Activated T-helper 1 cell treated with anti-CD3 and anti-CD28 coated beads, Interleukin-12 subunit alpha, Interleukin-12 subunit beta, Interleukin-2, Interleukin-4 antibody, amounts not matched to agents 30 ng/mL and 10 ng/mL and 1 ng/mL, durations not matched to agents 14 hours and 24 hours and 36 hours (primary cell): ENCODE measurements at regions of chr9 and their contacts with region 1.

Region 1: DNA sequence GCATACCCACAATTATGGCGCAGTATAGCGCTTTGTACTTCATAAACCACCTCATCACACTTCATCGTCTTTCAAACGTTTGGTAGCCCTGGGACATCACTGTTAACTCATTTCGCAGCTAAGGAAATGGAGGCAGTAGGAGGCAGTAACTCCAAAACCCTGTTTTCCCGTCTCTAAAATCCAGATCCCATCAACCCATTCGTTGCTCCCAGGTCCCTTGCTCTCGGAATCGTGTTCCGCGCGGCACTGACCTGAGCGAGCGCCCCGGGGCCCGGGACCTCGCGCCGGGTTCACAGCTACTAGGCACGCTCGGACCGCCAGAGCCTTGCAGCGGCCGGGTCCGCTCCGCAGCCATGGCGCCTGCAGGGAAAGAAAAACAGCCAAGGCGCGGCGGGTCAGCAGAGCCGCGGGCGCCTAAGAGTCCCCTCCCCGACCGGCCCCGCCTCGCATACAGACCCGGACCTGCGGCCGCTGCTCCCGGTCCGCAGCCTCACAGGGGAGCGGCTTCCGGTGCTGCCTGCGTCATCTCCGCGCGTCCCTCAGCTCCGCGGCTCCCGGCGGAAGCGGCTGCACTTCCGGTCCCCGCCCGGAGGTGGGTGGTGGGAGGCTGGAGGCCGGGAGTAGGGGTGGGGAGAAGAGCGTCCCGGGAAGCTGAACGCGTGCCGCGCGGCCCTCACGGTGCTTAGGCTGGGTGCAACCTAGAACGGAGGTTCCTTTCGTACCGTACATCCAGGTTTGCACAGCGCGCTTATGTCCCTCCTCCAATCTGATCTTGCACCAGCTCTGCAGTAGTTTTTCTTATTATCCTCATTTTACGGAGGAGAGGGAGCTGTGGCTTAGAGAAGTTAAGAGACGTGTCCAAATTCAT is at the start of gene FBXW2:
- DNase-seq: peak; percentile 90
- H3K4me3 Mint-ChIP-seq: peak within 1 kb of the TSS; percentile 98
- H3K27ac Mint-ChIP-seq: peak within 1 kb of the TSS; percentile 98
- H3K4me1 Mint-ChIP-seq: peaks cover 48% of the 10 kb centered on the region
- H3K27me3 Mint-ChIP-seq: no peaks in the 10 kb centered on the region
- total RNA-seq, gene FBXW2: 82.2 and 85.0 TPM in 2 replicates

Region 2: DNA sequence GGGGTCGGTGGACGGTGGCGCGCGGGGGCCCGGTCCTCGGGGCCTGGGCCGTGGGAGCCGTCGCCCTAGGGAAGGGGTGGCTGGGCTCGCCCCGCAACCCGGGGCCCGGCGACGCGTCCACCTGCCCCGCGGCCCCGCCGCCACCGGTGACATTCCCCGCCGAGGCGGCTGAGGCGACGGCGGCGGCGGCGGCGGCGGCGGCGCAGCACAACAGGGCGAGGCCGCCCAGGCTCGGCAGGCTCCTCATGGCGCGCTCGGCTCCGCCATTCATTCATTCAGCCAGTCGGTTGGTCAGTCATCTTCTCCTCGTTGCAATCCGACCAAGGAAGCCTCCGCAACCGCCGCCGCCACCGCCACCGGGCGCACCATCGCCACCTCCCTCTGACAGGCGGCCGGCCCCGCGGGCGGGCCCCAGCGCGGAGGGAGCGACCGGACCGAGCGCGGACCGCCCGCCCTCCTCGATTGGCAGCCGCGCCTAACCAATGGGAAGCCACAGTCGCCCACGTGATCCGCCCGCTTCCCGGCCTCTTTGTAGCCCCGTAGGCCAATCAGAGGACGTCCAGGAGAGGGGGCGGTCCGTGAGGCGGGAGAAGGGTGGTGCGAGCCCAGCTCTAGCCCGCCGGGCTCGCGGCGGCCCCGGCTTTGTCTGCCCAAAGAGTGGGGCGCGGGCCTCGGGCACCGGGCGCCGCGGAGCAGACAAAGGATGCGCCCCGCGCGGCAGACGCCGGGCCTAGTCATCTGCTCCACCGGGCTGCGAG is 78.9 kb before region 1 on chr9 and contains the start of gene MEGF9:
- intact Hi-C with region 1: loop called (anchors 1 kb)
- DNase-seq: peak; percentile 96
- H3K4me3 Mint-ChIP-seq: peak within 1 kb of the TSS; percentile 92
- H3K27ac Mint-ChIP-seq: peak within 1 kb of the TSS; percentile 82
- H3K4me1 Mint-ChIP-seq: peaks cover 41% of the 10 kb centered on the region
- H3K27me3 Mint-ChIP-seq: no peaks in the 10 kb centered on the region
- total RNA-seq, gene MEGF9: 5.4 and 5.9 TPM in 2 replicates

Region 3: GRCh38 chr9:120730661-120731514 is 62.2 kb before region 1 on chr9:
- intact Hi-C with region 1: no loop called
- DNase-seq: no peak
- H3K4me3 Mint-ChIP-seq: no peak overlapping the region
- H3K27ac Mint-ChIP-seq: no peak overlapping the region
- H3K4me1 Mint-ChIP-seq: peaks cover 14% of the 10 kb centered on the region
- H3K27me3 Mint-ChIP-seq: no peaks in the 10 kb centered on the region

Region 4: GRCh38 chr9:120868676-120869359 is 75.7 kb after region 1 on chr9:
- intact Hi-C with region 1: loop called (anchors 1 kb)
- DNase-seq: peak; percentile 93
- H3K4me3 Mint-ChIP-seq: peak overlapping the region; percentile 88
- H3K27ac Mint-ChIP-seq: peak overlapping the region; percentile 91
- H3K4me1 Mint-ChIP-seq: peaks cover 48% of the 10 kb centered on the region
- H3K27me3 Mint-ChIP-seq: no peaks in the 10 kb centered on the region

Region 5: GRCh38 chr9:120928483-120929228 is 135.5 kb after region 1 on chr9:
- intact Hi-C with region 1: loop called (anchors 1 kb)
- DNase-seq: peak; percentile 82
- H3K4me3 Mint-ChIP-seq: peak overlapping the region; percentile 89
- H3K27ac Mint-ChIP-seq: peak overlapping the region; percentile 96
- H3K4me1 Mint-ChIP-seq: peaks cover 87% of the 10 kb centered on the region
- H3K27me3 Mint-ChIP-seq: no peaks in the 10 kb centered on the region

Region 6: DNA sequence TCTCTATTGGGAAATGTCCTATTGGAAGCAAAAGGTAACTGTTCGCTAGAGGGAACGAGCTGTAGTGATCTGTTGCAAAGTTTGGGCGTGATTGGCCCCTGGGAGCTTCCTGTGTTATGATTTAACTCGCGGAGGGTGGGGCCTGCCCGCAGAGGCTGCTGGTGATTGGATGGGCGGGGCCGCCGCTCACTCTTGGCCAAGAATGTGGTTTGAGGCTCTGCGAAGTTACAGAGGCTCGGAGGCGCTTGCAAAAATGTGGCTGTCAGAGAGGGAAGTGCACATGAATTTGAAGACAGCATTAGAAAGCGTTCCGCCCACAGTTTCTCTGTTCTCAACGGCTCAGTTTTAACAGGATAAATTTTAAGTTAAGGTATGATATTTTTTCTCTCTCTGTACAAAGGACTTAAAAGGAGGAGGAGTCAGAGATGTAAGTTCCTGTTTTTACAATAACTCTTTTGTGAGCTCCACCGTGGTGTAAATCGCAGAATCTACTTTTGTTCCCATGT is 328.5 kb after region 1 on chr9:
- intact Hi-C with region 1: loop called (anchors 1 kb)
- DNase-seq: peak; percentile 96
- H3K4me3 Mint-ChIP-seq: peak overlapping the region; percentile 75
- H3K27ac Mint-ChIP-seq: peak overlapping the region; percentile 78
- H3K4me1 Mint-ChIP-seq: peaks cover 50% of the 10 kb centered on the region
- H3K27me3 Mint-ChIP-seq: no peaks in the 10 kb centered on the region

Region 7: DNA sequence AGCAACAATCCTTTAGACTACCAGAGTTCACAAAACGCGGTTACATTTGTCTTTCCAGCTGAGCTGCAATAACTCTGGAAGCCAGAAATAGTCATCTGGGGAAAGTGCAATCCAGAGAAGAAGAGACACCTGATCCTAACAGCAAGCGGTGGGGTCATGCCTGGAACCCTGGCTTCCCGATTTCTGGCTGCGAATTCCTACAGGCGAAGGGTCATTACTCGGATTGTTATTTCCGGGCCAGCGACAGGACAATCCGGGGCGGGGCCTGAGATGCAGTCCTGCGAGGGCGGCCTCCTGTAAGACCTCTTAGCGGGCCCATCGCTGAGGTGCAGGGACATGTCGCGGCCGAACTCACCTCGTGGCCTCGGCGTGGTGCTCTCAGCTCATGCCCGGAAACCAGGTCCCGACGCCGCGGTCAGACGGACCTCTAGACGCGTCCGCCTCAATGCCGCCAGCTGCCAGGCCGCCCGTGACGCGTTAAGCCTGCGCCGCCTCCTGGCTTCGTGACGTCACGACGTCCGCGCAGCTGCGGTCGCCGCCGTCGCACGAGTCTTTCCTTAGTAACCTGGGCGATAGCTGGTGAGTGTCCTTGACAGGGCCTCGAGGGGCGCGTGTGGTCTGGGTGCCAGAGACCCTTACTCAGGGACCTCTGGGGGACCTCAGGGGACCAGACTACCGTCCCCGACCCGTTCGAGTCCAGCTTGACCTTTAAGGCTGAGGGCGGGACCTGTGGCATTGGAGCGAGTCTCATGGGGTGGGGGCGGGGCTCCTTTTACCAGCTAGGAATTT is 1471.4 kb after region 1 on chr9 and contains the starts of genes MRRF and RBM18:
- intact Hi-C with region 1: loop called (anchors 5 kb)
- DNase-seq: peak; percentile 89
- H3K4me3 Mint-ChIP-seq: peak within 1 kb of the TSS; percentile 97
- H3K27ac Mint-ChIP-seq: peak within 1 kb of the TSS; percentile 100
- H3K4me1 Mint-ChIP-seq: peaks cover 38% of the 10 kb centered on the region
- H3K27me3 Mint-ChIP-seq: no peaks in the 10 kb centered on the region
- total RNA-seq, gene MRRF: 58.8 and 66.0 TPM in 2 replicates
- total RNA-seq, gene RBM18: 29.9 and 31.5 TPM in 2 replicates